ENCODE measurements at regions of chr17 and their contacts with region 1.

Region 1: DNA sequence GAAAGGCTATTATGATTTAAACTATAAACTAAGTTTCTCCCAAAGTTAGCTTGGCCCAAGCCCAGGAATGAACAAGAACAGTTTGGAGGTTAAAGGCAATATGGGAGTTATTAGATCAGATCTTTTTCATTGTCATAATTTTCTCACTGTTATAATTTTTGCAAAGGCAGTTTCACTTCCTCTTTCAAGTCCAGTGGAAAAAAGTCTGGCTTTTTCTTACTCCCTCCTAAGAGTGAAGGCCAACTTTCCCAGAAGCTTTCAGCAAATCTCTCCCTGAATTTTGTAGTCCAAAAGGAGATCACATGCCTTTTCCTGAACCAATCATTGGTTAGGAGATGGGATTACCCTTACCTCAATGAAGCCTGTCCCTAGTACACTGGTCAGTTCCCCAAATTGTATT is 9.1 kb upstream of the BLMH start:
- DNase-seq: no peak
- ATAC-seq: no peak
- H3K4me3 Mint-ChIP-seq: no peak overlapping the region
- H3K27ac Mint-ChIP-seq: no peak overlapping the region
- H3K4me1 Mint-ChIP-seq: no peaks in the 10 kb centered on the region
- H3K27me3 Mint-ChIP-seq: no peaks in the 10 kb centered on the region
- CTCF ChIP-seq: no peak

Region 2: GRCh38 chr17:30808785-30809286 is 508.0 kb after region 1 on chr17:
- CTCF ChIA-PET with region 1: no interaction called
- POLR2A ChIA-PET with region 1: interaction called, 10 read pairs
- DNase-seq: no peak
- ATAC-seq: no peak
- H3K4me3 Mint-ChIP-seq: no peak overlapping the region
- H3K27ac Mint-ChIP-seq: peak overlapping the region; percentile 85
- H3K4me1 Mint-ChIP-seq: peaks cover 25% of the 10 kb centered on the region
- H3K27me3 Mint-ChIP-seq: no peaks in the 10 kb centered on the region
- CTCF ChIP-seq: no peak

Measured in WTC11 (cell line).